Colonic mucosa (tissue), 4 donors: ENCODE measurements at regions of chr1 and their contacts with region 1.

Region 1: GRCh38 chr1:65209005-65209885 is 61.2 kb downstream of the AK4 start:
- DNase-seq: peak; percentile 45
- H3K4me3 ChIP-seq: no peak overlapping the region
- H3K27ac ChIP-seq: no peak overlapping the region
- H3K4me1 ChIP-seq: no peaks in the 10 kb centered on the region
- H3K27me3 ChIP-seq: no peaks in the 10 kb centered on the region
- CTCF ChIP-seq: peak; percentile 63

Region 2: DNA sequence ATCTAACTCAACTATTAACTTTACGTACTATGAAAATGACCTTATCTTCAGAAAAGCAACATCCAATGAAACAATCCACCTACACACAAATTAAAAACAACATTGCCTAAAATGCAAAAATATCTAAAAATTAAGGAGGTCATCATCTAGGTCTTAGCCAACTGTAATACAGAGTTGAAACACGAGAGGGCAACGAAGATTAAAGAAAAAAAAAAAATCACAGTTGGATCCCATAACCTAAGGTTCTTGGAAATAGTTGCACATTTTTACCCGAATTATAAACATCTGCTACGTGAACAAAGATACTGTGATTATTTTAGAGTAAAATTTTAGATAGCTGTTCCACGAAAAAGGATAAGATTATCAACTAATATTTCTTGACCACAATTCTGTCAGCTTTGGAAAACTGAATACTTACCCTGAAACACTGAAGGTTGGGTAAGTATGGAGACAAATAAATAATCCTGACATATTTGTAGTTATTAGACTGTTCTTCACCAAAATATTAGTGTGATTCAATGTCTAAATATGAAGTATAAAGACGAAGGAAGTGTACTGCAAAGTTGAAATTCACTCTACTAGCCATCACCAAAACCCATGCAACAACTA is 149.2 kb before region 1 on chr1:
- intact Hi-C with region 1: loop called (anchors 5 kb)
- DNase-seq: no peak
- H3K4me3 ChIP-seq: no peak overlapping the region
- H3K27ac ChIP-seq: no peak overlapping the region
- H3K4me1 ChIP-seq: no peaks in the 10 kb centered on the region
- H3K27me3 ChIP-seq: no peaks in the 10 kb centered on the region
- CTCF ChIP-seq: peak; percentile 61

Region 3: DNA sequence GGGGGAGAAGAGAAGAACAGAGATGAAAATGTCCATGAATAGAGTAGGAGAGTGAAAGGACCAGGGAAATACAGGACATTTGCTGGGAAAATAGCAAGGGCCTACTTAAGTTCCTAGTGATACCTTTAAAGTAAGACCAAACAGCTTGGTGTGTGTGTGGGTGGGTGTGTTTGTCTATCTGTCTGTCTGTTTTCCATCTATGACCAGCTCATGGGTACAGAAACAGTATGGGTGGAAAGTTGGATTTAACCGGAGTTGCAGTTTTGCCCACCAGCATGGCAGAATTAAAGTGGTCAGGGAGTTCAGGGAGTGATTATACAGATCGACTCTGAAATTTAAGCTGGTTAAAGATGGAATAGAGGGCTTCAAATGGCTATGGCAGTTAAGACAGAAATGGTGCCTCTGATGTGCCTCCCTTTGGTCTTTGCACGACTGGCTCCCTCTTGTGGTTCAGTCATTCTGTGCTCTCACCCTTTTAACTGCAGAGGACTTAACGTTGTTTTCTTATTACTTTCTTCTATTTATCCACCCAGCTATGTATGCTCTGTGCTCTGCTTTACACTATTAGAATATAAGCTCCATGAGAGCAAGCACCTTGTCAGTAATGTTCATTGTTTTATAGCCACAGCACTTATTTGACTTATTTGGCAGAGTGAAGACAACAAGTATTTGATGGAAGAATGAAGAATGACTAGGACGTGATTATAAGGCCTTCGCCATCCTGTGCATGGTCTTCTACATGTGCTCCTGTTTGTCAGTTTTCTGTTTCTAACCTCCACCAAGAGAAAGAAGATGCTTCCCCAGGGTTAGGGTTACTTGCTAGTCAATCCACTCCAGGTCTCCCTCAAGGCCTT is 133.9 kb before region 1 on chr1:
- intact Hi-C with region 1: loop called (anchors 5 kb)
- DNase-seq: peak; percentile 68
- H3K4me3 ChIP-seq: no peak overlapping the region
- H3K27ac ChIP-seq: no peak overlapping the region
- H3K4me1 ChIP-seq: no peaks in the 10 kb centered on the region
- H3K27me3 ChIP-seq: no peaks in the 10 kb centered on the region
- CTCF ChIP-seq: peak; percentile 71